HEK293 (cell line): ENCODE measurements at regions of chr19 and their contacts with region 1.

Region 1: GRCh38 chr19:18846862-18847548 is 15.2 kb downstream of the UPF1 start:
- H3K4me3 ChIP-seq: no peak overlapping the region
- H3K27ac ChIP-seq: no peak overlapping the region
- H3K4me1 ChIP-seq: peaks cover 6% of the 10 kb centered on the region; the same call in 1 of the 2 replicates
- CTCF ChIP-seq: peak; percentile 71

Region 2: DNA sequence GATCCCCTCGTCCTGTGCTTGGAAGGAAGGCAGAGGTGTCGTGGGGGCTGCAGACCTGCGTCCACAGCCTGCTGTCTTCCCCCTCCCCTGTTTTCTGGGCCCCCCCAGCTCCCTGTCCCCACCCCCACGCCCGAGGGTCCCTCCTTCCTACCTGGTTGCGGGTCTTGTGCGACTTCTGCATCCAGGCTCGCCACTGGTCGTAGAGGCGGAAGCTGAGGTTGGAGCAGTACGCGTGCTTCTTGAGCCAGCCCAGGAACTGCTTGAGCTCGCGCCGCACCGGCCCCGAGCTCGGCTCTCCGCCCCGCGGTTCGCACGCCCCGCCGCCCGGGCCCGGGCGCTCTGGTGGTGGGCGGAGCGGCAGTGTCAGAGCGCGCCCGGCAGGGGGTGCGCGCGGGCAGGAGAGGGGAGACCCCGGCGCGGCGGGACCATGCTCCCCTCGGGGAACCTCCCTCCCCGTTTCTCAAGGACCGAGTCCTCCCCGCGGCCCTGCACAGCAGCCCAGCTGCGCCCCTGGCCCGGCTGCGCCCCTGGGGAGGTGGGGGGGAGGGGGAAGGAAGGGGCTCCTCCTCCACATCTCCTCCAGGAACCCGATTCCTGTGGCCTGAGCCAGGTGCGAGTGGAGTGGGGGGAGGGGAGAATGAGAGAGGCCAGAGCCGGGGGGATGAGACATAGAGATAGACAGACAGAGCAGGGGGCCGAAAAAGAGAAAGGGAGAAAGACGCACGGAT is 252.7 kb before region 1 on chr19:
- CTCF ChIA-PET with region 1: interaction called, 19 read pairs
- POLR2A ChIA-PET with region 1: interaction called, 4 read pairs
- H3K4me3 ChIP-seq: peak overlapping the region; percentile 41
- H3K27ac ChIP-seq: no peak overlapping the region
- H3K4me1 ChIP-seq: no peaks in the 10 kb centered on the region
- CTCF ChIP-seq: peak; percentile 63

Region 3: DNA sequence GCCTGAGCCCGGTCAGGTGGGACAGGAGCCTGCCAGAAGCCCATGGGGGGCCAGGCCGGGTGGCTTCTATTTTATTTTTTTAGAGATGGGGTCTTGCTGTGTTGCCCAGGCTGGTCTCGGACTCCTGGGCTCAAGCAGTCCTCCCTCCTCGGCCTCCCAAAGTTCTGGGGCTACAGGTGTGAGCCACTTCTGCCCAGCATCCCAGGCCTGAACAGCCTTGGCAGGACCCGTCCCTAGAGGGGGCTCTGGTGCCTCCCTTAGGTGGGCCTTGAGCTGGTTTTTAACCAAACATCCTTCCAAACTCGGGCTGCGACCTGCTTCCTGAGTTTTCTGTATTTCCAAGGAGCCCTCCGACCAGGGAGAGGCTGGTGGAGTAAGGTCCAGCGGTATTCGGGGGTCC is 66.4 kb before region 1 on chr19:
- CTCF ChIA-PET with region 1: interaction called, 12 read pairs
- POLR2A ChIA-PET with region 1: interaction called, 3 read pairs
- H3K4me3 ChIP-seq: no peak overlapping the region
- H3K27ac ChIP-seq: no peak overlapping the region
- H3K4me1 ChIP-seq: peaks cover 4% of the 10 kb centered on the region
- CTCF ChIP-seq: peak; percentile 34; the same call in 1 of the 2 replicates

Region 4: DNA sequence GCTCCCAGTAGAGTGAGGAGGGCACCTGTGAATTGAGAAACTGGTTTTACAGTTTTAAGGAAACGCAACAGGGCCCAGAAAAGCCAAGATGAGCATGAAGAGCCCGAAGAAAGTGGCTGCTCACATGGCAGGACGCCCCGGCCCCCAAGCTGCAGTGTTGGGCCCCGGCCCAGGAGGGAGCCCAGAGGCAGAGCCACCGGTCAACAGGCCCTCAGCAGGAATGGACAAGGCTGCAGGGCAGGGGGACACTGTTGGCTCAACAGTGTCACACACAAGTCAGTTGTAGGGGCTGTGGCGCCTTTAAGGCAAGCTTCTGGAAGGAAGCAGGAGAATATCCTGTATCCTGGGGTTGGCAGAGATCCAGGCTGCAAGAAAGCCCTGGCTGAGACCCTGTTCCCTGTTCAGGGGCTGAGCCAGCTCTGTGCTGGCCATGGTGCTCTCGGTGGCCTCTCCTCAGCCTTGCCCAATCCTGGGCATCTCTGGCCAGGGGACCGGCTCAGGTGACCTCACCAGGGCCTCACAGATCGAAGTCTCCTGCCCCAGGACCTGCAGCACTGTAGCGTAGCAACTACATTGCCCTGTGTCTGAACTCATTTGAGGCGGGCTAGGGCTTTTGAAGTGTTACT is 12.8 kb after region 1 on chr19:
- CTCF ChIA-PET with region 1: interaction called, 22 read pairs
- POLR2A ChIA-PET with region 1: interaction called, 3 read pairs
- H3K4me3 ChIP-seq: no peak overlapping the region
- H3K27ac ChIP-seq: no peak overlapping the region
- H3K4me1 ChIP-seq: no peaks in the 10 kb centered on the region
- CTCF ChIP-seq: no peak